ENCODE measurements at regions of chr17 and their contacts with region 1.

Region 1: DNA sequence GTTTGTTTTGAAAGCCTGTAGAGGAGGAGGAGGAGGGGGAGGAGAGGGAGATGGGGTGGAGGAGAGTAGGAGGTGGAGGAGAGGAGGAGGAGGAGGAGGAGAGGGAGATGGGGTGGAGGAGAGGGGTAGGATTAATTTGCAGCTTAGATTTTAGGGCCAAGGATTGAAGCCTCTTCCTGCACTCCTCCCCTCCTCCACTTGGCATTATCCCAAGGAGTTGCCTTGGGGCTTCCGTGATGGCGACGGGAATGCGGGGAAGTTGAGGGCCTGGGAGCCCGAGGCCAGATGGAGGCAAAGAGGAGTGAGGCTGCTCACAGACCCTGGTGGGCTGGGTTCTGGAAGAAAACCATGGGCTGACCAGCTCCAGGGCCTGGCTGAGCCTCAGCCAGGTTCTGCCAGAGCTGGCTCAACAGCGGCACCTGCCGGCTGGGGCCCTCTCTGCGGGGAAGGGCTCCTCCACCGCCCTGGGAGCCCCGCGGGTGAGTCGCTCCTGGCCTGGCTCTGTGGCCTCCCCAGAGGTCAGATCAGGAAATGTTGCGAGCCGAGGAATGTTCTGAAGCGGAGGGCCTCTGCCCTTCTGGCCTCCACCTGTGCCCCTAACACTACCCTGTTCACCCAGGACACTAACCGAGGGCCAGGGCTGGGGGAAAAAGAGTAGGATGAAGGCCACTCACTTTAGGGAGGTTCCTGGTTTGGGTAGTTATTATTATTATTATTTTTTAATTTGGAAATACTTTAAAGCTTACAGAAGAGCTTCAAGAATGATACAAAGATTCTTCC is 23.9 kb upstream of the FMNL1 start:
- DNase-seq: peak; percentile 72 to 92 (median 84)
- ATAC-seq: peak; percentile 99 to 100
- H3K4me3 Mint-ChIP-seq: no peak overlapping the region
- H3K27ac Mint-ChIP-seq: no peak overlapping the region
- H3K4me1 Mint-ChIP-seq: peaks cover 2 to 9% (median 5%) of the 10 kb centered on the region in 4 donors
- H3K27me3 Mint-ChIP-seq: no peaks in the 10 kb centered on the region

Region 2: GRCh38 chr17:45135192-45135977 is 62.4 kb before region 1 on chr17 and contains the start of gene ACBD4:
- POLR2A ChIA-PET with region 1: interaction called, 25 read pairs
- DNase-seq: peak; percentile 92 to 100 (median 98)
- ATAC-seq: peak; percentile 86 to 88
- H3K4me3 Mint-ChIP-seq: peak within 1 kb of the TSS; percentile 86 to 94 (median 90)
- H3K27ac Mint-ChIP-seq: peak within 1 kb of the TSS; percentile 65 to 95 (median 88)
- H3K4me1 Mint-ChIP-seq: peaks cover 8 to 26% (median 18%) of the 10 kb centered on the region in 4 donors
- H3K27me3 Mint-ChIP-seq: peaks cover 0 to 3% (median 3%) of the 10 kb centered on the region in 5 donors
- polyA plus RNA-seq, gene ACBD4: 10.5 to 17.4 (median 11.7) TPM

Region 3: DNA sequence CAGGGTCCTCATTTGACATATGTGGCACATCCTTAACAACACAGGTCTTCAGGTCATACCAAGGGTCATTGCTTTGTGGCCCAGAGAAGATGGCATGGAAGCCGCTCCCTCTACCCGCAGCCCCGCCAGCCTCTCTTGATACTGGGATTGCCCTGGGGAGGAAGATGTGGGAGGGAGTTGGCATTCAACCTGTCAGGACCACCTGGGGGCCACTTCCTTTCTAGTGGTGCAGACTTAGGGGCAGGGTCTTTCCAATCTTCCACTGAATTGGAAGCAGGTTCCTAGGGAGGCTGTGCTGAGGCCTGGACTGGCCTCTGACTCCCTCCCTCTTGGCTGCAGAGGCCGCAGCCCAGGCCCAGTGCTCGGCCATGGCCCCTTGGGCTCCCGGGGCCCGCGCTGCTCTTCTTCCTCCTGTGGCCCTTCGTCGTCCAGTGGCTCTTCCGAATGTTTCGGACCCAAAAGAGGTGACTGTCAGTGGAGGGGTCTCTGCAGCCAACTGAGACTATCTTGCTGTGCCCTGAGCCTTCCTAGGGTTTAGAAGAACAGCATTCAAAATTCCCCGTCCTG is 54.6 kb before region 1 on chr17:
- POLR2A ChIA-PET with region 1: interaction called, 78 read pairs
- DNase-seq: no peak
- ATAC-seq: no peak
- H3K4me3 Mint-ChIP-seq: peak overlapping the region; percentile 68 to 93 (median 80)
- H3K27ac Mint-ChIP-seq: peak overlapping the region; percentile 40 to 91 (median 76)
- H3K4me1 Mint-ChIP-seq: peaks cover 17 to 55% (median 48%) of the 10 kb centered on the region in 4 donors
- H3K27me3 Mint-ChIP-seq: peaks cover 0 to under 1% (median 0%) of the 10 kb centered on the region in 5 donors

Region 4: DNA sequence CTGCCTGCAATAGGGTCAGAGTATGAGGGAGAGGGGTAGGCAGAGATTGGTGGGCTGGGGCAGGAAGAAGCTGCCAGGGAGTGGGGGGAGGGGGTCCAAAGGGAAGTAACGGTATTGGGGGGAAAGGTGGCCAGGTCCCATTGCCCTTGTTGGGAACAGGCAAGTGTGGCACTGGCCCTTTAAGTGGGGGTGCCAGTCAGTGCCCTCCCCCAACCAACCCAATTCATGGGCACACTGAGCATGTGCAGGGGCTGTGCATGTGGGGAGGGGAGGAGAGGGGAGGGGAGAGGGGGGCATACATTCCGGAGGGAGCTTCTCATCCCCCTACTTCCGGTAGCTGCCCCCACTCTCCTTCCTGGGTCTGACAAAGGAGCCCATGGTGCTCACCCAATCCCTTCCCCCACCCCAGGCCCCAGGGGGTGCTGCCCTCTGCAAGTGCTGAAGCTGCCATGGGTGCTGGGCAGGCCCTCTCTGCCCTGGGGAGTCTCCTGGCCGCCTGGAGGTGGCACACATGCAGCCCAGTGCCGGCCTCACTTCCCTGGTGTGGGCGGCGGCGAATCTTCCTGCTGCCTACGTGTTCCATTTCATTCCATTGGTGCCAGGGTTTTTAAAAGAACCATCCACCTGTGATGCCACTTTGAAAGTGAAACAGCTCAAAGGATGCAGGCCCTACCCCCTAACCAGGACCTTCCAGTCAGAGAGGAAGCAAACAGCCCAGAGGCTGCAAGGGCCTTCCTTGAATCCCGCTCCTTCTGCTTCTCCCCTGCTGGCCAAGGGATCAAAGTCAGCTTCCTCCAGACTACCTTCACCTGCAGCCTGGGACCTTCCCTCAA is 25.1 kb before region 1 on chr17:
- POLR2A ChIA-PET with region 1: interaction called, 10 read pairs
- DNase-seq: peak; percentile 30 to 85 (median 48)
- ATAC-seq: peak; percentile 85
- H3K4me3 Mint-ChIP-seq: peak overlapping the region; percentile 75 to 89 (median 82)
- H3K27ac Mint-ChIP-seq: peak overlapping the region; percentile 91 to 98 (median 94)
- H3K4me1 Mint-ChIP-seq: peaks cover 6 to 32% (median 30%) of the 10 kb centered on the region in 4 donors
- H3K27me3 Mint-ChIP-seq: no peaks in the 10 kb centered on the region

Region 5: GRCh38 chr17:45270828-45271418 is 73.2 kb after region 1 on chr17:
- POLR2A ChIA-PET with region 1: no interaction called
- DNase-seq: peak; percentile 31 to 76 (median 59)
- ATAC-seq: peak; percentile 84 to 85
- H3K4me3 Mint-ChIP-seq: no peak overlapping the region
- H3K27ac Mint-ChIP-seq: peak overlapping the region in 6 of 10 donors; percentile 30 to 71 (median 48)
- H3K4me1 Mint-ChIP-seq: peaks cover 0 to 8% (median 3%) of the 10 kb centered on the region in 4 donors
- H3K27me3 Mint-ChIP-seq: no peaks in the 10 kb centered on the region

Region 6: GRCh38 chr17:45431531-45432404 is 234.0 kb after region 1 on chr17:
- POLR2A ChIA-PET with region 1: no interaction called
- DNase-seq: peak; percentile 44 to 79 (median 58)
- ATAC-seq: peak; percentile 51 to 73
- H3K4me3 Mint-ChIP-seq: peak overlapping the region; percentile 74 to 88 (median 85)
- H3K27ac Mint-ChIP-seq: peak overlapping the region in 5 of 10 donors; percentile 28 to 72 (median 52)
- H3K4me1 Mint-ChIP-seq: peaks cover 10 to 33% (median 24%) of the 10 kb centered on the region in 4 donors
- H3K27me3 Mint-ChIP-seq: no peaks in the 10 kb centered on the region